ENCODE measurements at regions of chr1 and their contacts with region 1.

Region 1: GRCh38 chr1:24502709-24503058 is at the start of gene RCAN3:
- DNase-seq: peak; percentile 74 to 96 (median 87)
- ATAC-seq: peak; percentile 54
- H3K4me3 ChIP-seq: peak within 1 kb of the TSS; percentile 90
- H3K4me3 Mint-ChIP-seq: peak within 1 kb of the TSS; percentile 98
- H3K27ac ChIP-seq: peak within 1 kb of the TSS; percentile 95 to 97
- H3K27ac Mint-ChIP-seq: peak within 1 kb of the TSS; percentile 96
- H3K4me1 ChIP-seq: peaks cover 56% of the 10 kb centered on the region
- H3K4me1 Mint-ChIP-seq: peaks cover 69% of the 10 kb centered on the region
- H3K27me3 ChIP-seq: no peaks in the 10 kb centered on the region
- H3K27me3 Mint-ChIP-seq: no peaks in the 10 kb centered on the region
- CTCF ChIP-seq: no peak
- total RNA-seq, gene RCAN3: 185 to 191 TPM

Region 2: DNA sequence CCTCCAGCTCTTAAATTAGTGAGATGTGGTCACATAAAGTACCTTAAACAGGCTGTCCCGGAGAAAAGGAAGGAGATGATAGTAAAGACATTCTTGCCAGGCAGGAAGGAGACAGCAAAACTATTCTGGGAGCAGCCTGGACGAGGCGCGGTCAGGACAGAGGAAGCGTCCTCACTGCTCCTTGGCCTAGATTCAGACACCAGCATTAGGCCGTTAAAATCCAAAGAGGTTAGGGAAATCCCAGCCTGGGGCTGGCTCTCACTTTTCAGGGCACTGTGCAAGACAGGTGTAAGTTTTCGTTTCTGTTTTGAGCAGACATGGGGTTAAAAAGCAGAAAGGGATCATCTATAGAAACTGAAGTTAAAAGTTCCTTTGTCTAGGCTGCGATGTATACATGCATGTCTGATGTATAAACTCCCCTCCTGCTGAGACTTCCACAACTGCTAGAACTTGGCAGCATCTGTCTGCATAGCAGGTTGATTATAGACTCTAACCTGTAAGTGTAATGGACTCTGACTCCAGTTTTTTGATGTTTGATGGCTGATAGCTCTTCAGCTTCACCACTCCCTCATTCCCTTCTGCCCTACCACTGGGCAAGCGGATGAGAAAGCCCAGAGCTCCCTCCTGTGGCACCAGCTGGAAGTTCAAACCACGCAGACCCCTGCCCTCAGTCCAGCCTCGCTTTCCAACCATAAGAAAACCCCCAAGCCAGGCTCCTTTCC is 110.6 kb before region 1 on chr1:
- CTCF ChIA-PET with region 1: interaction called, 5 read pairs
- POLR2A ChIA-PET with region 1: interaction called, 12 read pairs
- intact Hi-C with region 1: no loop called
- DNase-seq: peak; percentile 44 to 84 (median 55)
- ATAC-seq: peak; percentile 79
- H3K4me3 ChIP-seq: peak overlapping the region; percentile 32
- H3K4me3 Mint-ChIP-seq: peak overlapping the region; percentile 52
- H3K27ac ChIP-seq: peak overlapping the region; percentile 63 to 78
- H3K27ac Mint-ChIP-seq: peak overlapping the region; percentile 85
- H3K4me1 ChIP-seq: peaks cover 29% of the 10 kb centered on the region
- H3K4me1 Mint-ChIP-seq: peaks cover 42% of the 10 kb centered on the region
- H3K27me3 ChIP-seq: no peaks in the 10 kb centered on the region
- H3K27me3 Mint-ChIP-seq: no peaks in the 10 kb centered on the region
- CTCF ChIP-seq: peak; percentile 75

Region 3: GRCh38 chr1:24463776-24464735 is 38.6 kb before region 1 on chr1:
- CTCF ChIA-PET with region 1: no interaction called
- POLR2A ChIA-PET with region 1: interaction called, 19 read pairs
- intact Hi-C with region 1: no loop called
- DNase-seq: peak in 1 of 14 experiments; percentile 15
- ATAC-seq: peak; percentile 59
- H3K4me3 ChIP-seq: no peak overlapping the region
- H3K4me3 Mint-ChIP-seq: peak overlapping the region; percentile 65
- H3K27ac ChIP-seq: no peak overlapping the region
- H3K27ac Mint-ChIP-seq: peak overlapping the region; percentile 75
- H3K4me1 ChIP-seq: peaks cover 15% of the 10 kb centered on the region
- H3K4me1 Mint-ChIP-seq: peaks cover 40% of the 10 kb centered on the region
- H3K27me3 ChIP-seq: no peaks in the 10 kb centered on the region
- H3K27me3 Mint-ChIP-seq: no peaks in the 10 kb centered on the region
- CTCF ChIP-seq: no peak

Region 4: GRCh38 chr1:24481101-24481500 is 21.6 kb before region 1 on chr1:
- CTCF ChIA-PET with region 1: interaction called, 13 read pairs
- POLR2A ChIA-PET with region 1: interaction called, 692 read pairs
- intact Hi-C with region 1: loop called (anchors 1 kb)
- DNase-seq: peak in 13 of 14 experiments; percentile 23 to 90 (median 53)
- ATAC-seq: peak; percentile 70
- H3K4me3 ChIP-seq: no peak overlapping the region
- H3K4me3 Mint-ChIP-seq: peak overlapping the region; percentile 90
- H3K27ac ChIP-seq: peak overlapping the region; percentile 25 to 81
- H3K27ac Mint-ChIP-seq: peak overlapping the region; percentile 98
- H3K4me1 ChIP-seq: peaks cover 63% of the 10 kb centered on the region
- H3K4me1 Mint-ChIP-seq: peaks cover 63% of the 10 kb centered on the region
- H3K27me3 ChIP-seq: no peaks in the 10 kb centered on the region
- H3K27me3 Mint-ChIP-seq: no peaks in the 10 kb centered on the region
- CTCF ChIP-seq: no peak

Region 5: GRCh38 chr1:24514946-24515345 is 12.3 kb after region 1 on chr1:
- CTCF ChIA-PET with region 1: interaction called, 4 read pairs
- POLR2A ChIA-PET with region 1: interaction called, 42 read pairs
- intact Hi-C with region 1: no loop called
- DNase-seq: no peak
- ATAC-seq: no peak
- H3K4me3 ChIP-seq: no peak overlapping the region
- H3K4me3 Mint-ChIP-seq: no peak overlapping the region
- H3K27ac ChIP-seq: no peak overlapping the region
- H3K27ac Mint-ChIP-seq: peak overlapping the region; percentile 96
- H3K4me1 ChIP-seq: peaks cover 76% of the 10 kb centered on the region
- H3K4me1 Mint-ChIP-seq: peaks cover 81% of the 10 kb centered on the region
- H3K27me3 ChIP-seq: no peaks in the 10 kb centered on the region
- H3K27me3 Mint-ChIP-seq: no peaks in the 10 kb centered on the region
- CTCF ChIP-seq: no peak

Region 6: DNA sequence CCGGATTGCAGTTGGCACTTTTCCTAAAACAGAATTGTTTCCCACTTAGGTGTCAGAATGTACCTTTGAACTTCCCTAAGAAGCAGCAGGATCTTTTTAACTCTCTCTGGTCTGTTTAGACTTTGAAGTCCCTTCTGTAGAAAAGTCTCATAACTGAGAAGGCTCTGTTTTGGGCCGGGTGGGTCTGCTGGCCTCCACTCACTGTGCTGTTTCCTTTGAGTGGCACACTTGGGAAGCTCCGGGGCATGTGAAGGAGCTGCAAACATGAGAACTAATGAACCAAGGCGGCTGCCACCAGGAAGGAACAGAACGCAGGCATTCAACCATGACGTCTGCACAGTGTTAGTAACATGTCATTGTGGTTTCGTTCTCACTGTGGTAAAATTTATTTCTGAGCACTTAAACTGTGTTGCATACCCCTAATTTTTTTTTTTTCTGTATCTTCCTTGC is 33.7 kb after region 1 on chr1:
- CTCF ChIA-PET with region 1: interaction called, 3 read pairs
- POLR2A ChIA-PET with region 1: interaction called, 62 read pairs
- intact Hi-C with region 1: loop called (anchors 1 to 2 kb)
- DNase-seq: peak; percentile 41 to 94 (median 64)
- ATAC-seq: peak; percentile 80
- H3K4me3 ChIP-seq: no peak overlapping the region
- H3K4me3 Mint-ChIP-seq: peak overlapping the region; percentile 86
- H3K27ac ChIP-seq: peak overlapping the region; percentile 86 to 95
- H3K27ac Mint-ChIP-seq: peak overlapping the region; percentile 96
- H3K4me1 ChIP-seq: peaks cover 43% of the 10 kb centered on the region
- H3K4me1 Mint-ChIP-seq: peaks cover 79% of the 10 kb centered on the region
- H3K27me3 ChIP-seq: no peaks in the 10 kb centered on the region
- H3K27me3 Mint-ChIP-seq: no peaks in the 10 kb centered on the region
- CTCF ChIP-seq: no peak

Region 7: DNA sequence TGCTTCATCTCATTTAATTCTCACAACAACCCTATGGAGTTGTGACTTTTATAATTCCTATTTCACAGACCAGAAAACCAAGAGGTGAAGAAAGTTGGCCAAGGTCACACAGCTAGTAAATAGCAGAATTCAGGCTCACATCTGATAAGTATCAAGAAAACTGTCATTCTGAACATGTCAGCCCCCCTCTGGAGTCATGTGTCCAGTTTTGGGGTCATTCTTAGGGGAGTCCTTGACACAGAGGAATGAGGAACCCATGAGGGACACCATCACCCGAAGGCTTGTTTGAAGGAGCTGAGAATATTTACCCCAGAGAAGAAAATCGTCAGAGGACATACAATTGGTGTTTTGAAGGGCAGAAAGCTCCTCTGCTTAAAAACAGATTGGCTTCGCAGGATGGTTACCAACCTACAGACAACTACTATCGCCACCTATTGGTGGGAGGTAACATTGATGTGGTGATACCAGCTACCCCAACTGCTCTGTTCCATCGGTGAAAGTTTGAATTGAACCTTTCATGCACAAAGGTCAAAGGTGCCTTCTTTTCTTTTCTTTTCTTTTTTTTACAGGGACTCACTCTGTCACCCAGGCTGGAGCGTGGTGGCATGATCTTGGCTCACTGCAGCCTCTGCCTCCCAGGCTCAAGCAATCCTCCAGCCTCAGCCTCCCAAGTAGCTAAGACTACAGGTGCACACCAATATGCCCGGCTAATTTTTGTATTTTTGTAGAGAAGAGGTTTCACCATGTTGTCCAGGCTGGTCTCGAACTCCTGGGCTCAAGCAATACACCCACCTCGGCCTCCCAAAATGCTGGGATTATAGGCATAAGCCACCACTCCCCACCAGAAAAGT is 84.5 kb after region 1 on chr1:
- CTCF ChIA-PET with region 1: interaction called, 30 read pairs
- POLR2A ChIA-PET with region 1: interaction called, 28 read pairs
- intact Hi-C with region 1: no loop called
- DNase-seq: peak in 13 of 14 experiments; percentile 4 to 87 (median 48)
- ATAC-seq: peak; percentile 100
- H3K4me3 ChIP-seq: no peak overlapping the region
- H3K4me3 Mint-ChIP-seq: no peak overlapping the region
- H3K27ac ChIP-seq: no peak overlapping the region
- H3K27ac Mint-ChIP-seq: peak overlapping the region; percentile 66
- H3K4me1 ChIP-seq: peaks cover 3% of the 10 kb centered on the region
- H3K4me1 Mint-ChIP-seq: peaks cover 9% of the 10 kb centered on the region
- H3K27me3 ChIP-seq: no peaks in the 10 kb centered on the region
- H3K27me3 Mint-ChIP-seq: no peaks in the 10 kb centered on the region
- CTCF ChIP-seq: peak; percentile 86

Measured in CD4-positive, alpha-beta T cell (primary cell).